ENCODE measurements at regions of chr11 and their contacts with region 1.

Region 1: GRCh38 chr11:69048718-69049489 is at the start of gene TPCN2:
- DNase-seq: peak; percentile 97
- total RNA-seq, gene TPCN2: 24.8 to 25.4 TPM

Region 2: GRCh38 chr11:69010964-69011623 is 37.8 kb before region 1 on chr11:
- intact Hi-C with region 1: loop called (anchors 2 kb)
- DNase-seq: peak; percentile 93

Region 3: GRCh38 chr11:69080257-69080995 is 31.5 kb after region 1 on chr11:
- intact Hi-C with region 1: loop called in 1 of 2 experiments (anchors 5 kb)
- DNase-seq: no peak